Left lung (tissue), 14 donors: ENCODE measurements at regions of chr3 and their contacts with region 1.

Region 1: DNA sequence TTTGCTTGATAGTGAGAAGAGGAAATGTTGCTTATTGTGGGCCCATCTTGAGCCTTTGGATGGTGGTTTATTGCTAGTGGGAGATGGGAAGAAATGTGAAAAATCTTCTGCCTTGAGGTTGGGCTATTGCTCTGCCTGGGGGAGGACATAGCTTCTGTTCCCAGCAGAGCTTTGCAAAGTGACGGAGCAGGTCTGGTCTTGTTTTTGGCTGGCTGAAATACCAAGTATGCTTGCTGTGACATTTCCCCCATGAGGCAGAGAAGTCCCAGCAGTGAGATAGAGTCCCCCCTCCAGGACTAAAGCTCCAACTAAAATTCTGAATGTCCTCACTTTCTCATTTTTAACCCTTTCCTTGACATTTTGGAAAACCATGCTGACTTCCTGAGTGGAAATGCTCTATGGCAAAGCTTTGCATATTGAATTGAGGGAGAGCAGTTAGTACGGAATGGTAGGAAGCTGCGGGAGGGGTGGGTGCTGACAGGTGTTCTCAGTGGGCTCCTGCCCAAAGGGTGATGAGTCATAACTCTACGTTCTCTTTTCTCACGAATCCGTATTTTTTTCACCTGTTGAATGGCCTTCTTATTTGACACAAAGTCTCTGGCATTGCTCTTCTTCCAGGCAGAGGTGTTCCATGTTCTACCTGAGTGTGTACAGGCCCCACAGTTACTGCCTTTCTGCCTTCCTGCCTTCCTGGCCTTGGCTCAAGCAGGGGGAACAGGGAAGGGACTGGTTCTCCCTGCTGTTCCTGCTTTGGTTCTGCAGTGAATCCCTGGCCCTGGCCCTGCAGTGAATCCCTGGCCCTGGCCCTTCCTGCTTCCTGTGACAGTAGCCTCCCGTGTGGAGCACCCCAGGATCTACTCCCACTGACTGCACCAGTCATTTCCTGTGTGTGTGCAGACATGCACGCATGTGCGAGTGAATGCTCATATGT is 31.8 kb downstream of the TRAK1 start:
- DNase-seq: no peak
- ATAC-seq: no peak
- H3K4me3 ChIP-seq: no peak overlapping the region
- H3K27ac ChIP-seq: peak overlapping the region in 1 of 2 donors; percentile 26
- H3K4me1 ChIP-seq: peaks cover 11 to 40% of the 10 kb centered on the region in 2 donors
- H3K27me3 ChIP-seq: no peaks in the 10 kb centered on the region
- CTCF ChIP-seq: no peak

Region 2: GRCh38 chr3:41933146-41933676 is 189.7 kb before region 1 on chr3:
- intact Hi-C with region 1: no loop called
- DNase-seq: peak in 2 of 4 donors; percentile 38 to 45
- ATAC-seq: peak; percentile 72
- H3K4me3 ChIP-seq: no peak overlapping the region
- H3K27ac ChIP-seq: peak overlapping the region in 1 of 2 donors; percentile 28
- H3K4me1 ChIP-seq: peaks cover 0 to 6% of the 10 kb centered on the region in 2 donors
- H3K27me3 ChIP-seq: no peaks in the 10 kb centered on the region
- CTCF ChIP-seq: no peak

Region 3: DNA sequence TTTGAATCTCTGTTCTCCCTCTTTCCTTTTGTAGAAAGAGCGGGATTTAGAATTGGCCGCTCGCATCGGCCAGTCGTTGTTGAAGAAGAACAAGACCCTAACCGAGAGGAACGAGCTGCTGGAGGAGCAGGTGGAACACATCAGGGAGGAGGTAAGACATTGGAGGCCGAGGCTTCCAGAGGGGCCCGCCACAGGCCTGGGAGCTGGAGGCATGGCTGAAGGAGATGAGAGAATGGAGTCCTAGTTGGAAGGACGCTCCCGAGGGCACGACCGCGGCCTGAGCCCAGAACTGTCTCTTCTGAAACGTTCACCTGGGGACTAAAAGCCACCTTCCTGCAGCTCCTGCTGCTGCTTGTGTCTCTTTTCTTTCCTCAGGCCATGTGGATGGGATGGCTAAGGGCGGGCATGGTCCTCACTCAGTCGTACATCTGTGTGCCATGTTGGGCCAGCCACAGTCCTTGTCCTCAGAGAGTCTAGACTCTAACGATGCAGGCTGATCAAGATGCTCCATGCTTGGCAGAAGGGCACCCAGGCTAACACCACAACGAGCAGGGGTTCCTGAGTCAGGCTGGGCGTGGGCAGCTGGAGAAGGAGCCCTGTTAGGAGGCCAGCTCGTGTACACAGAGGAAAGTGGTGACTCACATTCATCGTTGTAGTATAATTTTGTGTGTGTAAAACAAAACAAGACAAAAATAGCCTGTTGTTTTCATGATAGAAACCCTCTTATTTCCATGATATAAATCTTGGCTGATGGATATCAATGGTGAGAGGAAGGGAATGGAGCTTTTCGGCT is 61.9 kb after region 1 on chr3:
- intact Hi-C with region 1: loop called in 1 of 2 experiments (anchors 10 kb)
- DNase-seq: peak in 1 of 4 donors; percentile 69
- ATAC-seq: no peak
- H3K4me3 ChIP-seq: no peak overlapping the region
- H3K27ac ChIP-seq: no peak overlapping the region
- H3K4me1 ChIP-seq: peaks cover 6 to 7% of the 10 kb centered on the region in 2 donors
- H3K27me3 ChIP-seq: no peaks in the 10 kb centered on the region
- CTCF ChIP-seq: no peak

Region 4: DNA sequence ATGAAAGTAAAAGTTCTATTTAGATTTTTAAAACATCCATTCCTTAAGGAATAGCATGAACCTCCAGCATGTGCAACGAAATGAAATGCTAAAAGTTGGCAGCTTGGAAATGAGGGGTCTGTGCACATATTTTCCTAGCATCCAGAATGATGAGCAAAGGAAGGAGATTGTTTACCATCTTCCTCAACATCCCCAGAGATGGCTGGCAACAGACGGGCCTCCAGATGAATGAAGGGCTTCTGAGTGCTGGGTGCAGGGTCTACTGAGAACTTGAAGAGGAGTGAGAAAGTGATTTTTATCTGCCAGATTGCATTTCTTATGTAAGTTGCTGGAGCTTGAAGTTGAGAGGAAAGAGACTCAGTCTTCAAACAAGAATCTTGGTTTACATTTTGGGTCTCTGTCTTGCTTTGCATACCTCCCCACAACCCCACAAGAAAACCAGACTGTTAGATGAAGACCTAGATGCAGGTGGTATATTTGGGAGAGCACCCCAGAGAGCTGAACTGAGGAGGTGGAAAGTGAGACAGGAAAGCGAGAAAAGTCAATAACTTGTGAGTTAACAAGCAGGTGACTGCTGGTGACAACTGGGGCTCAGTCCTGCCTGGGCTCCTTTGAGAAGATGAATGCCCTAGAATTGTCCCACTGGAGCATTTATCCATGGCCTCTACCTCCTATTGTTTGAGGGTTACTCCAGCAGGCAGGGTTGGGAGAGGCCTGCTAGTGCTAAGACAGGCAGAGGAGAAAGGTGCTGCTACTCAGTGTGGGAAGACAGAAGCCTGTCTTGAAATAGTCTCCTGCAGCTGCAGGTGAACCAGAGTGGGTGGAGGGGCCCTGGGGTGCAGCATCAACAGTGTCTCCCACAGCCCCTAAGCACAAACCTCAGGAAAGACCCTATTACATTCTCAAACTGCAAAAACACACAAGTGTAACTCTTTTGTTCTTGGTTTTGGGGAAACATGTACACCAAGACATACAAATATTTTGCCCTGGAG is 153.5 kb after region 1 on chr3:
- intact Hi-C with region 1: no loop called
- DNase-seq: no peak
- ATAC-seq: no peak
- H3K4me3 ChIP-seq: no peak overlapping the region
- H3K27ac ChIP-seq: no peak overlapping the region
- H3K4me1 ChIP-seq: no peaks in the 10 kb centered on the region
- H3K27me3 ChIP-seq: peaks cover 0 to 2% of the 10 kb centered on the region in 2 donors
- CTCF ChIP-seq: no peak